ENCODE measurements at regions of chr1 and their contacts with region 1.

Region 1: DNA sequence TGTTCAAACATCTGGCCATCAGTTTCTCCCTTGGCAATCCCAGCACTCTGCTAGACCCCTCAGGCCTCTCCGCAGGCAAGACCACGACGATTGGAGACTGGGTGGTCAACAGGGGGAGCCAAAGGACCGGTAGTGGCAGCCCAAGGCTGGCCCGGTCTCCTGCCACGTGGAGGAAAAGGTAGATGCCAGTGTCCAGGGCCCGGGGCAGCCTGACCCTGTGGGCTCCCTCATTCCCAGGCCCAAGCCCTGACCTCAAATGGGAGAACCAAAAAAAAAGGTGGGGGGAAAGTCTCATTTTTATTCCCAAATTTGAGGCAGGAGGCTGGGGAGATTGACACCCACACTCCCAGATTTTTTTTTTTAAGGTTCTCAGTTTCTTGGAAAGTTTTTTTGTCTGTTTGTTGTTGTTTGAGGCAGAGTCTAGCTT is 24.8 kb downstream of the S100A6 start:
- DNase-seq: peak; percentile 64 to 85 (median 69)
- H3K4me3 ChIP-seq: no peak overlapping the region
- H3K4me3 Mint-ChIP-seq: no peak overlapping the region
- H3K27ac ChIP-seq: no peak overlapping the region
- H3K27ac Mint-ChIP-seq: peak overlapping the region in 2 of 8 donors; percentile 32 to 51
- H3K4me1 ChIP-seq: peaks cover 3% of the 10 kb centered on the region
- H3K4me1 Mint-ChIP-seq: peaks cover 7 to 8% (median 7%) of the 10 kb centered on the region in 3 donors
- H3K27me3 ChIP-seq: no peaks in the 10 kb centered on the region
- H3K27me3 Mint-ChIP-seq: no peaks in the 10 kb centered on the region

Region 2: GRCh38 chr1:153566440-153567379 is 55.7 kb after region 1 on chr1:
- CTCF ChIA-PET with region 1: interaction called, 109 read pairs
- POLR2A ChIA-PET with region 1: interaction called, 3 read pairs
- DNase-seq: peak in 4 of 5 donors; percentile 54 to 89 (median 66)
- H3K4me3 ChIP-seq: no peak overlapping the region
- H3K4me3 Mint-ChIP-seq: peak overlapping the region in 6 of 7 donors; percentile 30 to 63 (median 46)
- H3K27ac ChIP-seq: peak overlapping the region; percentile 43
- H3K27ac Mint-ChIP-seq: peak overlapping the region; percentile 76 to 91 (median 85)
- H3K4me1 ChIP-seq: peaks cover 24% of the 10 kb centered on the region
- H3K4me1 Mint-ChIP-seq: peaks cover 27 to 35% (median 34%) of the 10 kb centered on the region in 3 donors
- H3K27me3 ChIP-seq: no peaks in the 10 kb centered on the region
- H3K27me3 Mint-ChIP-seq: peaks cover 1 to 16% of the 10 kb centered on the region in 2 donors

Region 3: GRCh38 chr1:153572569-153573015 is 61.6 kb after region 1 on chr1:
- CTCF ChIA-PET with region 1: interaction called, 109 read pairs
- POLR2A ChIA-PET with region 1: interaction called, 3 read pairs
- DNase-seq: peak in 3 of 5 donors; percentile 6 to 59 (median 19)
- H3K4me3 ChIP-seq: no peak overlapping the region
- H3K4me3 Mint-ChIP-seq: no peak overlapping the region
- H3K27ac ChIP-seq: no peak overlapping the region
- H3K27ac Mint-ChIP-seq: peak overlapping the region in 1 of 8 donors; percentile 28
- H3K4me1 ChIP-seq: peaks cover 5% of the 10 kb centered on the region
- H3K4me1 Mint-ChIP-seq: peaks cover 11 to 17% (median 15%) of the 10 kb centered on the region in 3 donors
- H3K27me3 ChIP-seq: no peaks in the 10 kb centered on the region
- H3K27me3 Mint-ChIP-seq: peaks cover 2 to 27% of the 10 kb centered on the region in 2 donors

Region 4: DNA sequence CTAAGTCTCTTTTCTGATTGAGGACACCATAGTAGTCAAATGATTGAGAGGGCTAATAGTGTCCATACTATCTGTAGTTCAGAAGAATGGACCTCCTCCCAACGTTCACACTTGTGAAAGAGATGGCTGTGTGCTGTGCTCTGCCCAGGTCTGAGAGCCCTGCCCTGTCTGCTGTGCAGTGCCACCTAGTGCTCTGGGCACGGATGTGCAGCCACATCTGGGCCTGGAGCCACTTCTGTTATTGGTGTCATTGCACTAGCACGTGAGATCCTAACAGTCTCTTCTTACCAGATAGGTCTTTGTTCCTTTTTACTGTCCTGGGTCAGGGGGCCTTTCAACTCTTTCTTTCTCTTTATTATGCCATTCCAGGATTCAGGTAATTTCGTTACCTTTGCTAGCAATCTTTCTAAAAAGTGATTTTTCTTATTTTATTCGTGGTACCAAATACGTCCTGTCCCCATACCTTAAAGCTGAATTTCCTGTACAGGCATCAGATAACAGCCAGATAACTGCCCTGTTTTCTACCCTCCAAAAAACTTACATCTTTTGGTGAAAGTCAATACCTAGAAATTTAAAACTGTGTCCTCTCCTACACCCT is 238.5 kb after region 1 on chr1:
- CTCF ChIA-PET with region 1: interaction called, 14 read pairs
- POLR2A ChIA-PET with region 1: no interaction called
- DNase-seq: peak; percentile 64 to 84 (median 66)
- H3K4me3 ChIP-seq: no peak overlapping the region
- H3K4me3 Mint-ChIP-seq: no peak overlapping the region
- H3K27ac ChIP-seq: no peak overlapping the region
- H3K27ac Mint-ChIP-seq: peak overlapping the region in 6 of 8 donors; percentile 3 to 66 (median 37)
- H3K4me1 ChIP-seq: no peaks in the 10 kb centered on the region
- H3K4me1 Mint-ChIP-seq: peaks cover 4 to 6% (median 5%) of the 10 kb centered on the region in 3 donors
- H3K27me3 ChIP-seq: no peaks in the 10 kb centered on the region
- H3K27me3 Mint-ChIP-seq: no peaks in the 10 kb centered on the region

Measured in CD8-positive, alpha-beta memory T cell (primary cell).